ENCODE measurements at regions of chr10 and their contacts with region 1.

Region 1: GRCh38 chr10:74081192-74081803 is 69.3 kb downstream of the AP3M1 start:
- DNase-seq: no peak
- H3K4me3 ChIP-seq: no peak overlapping the region
- H3K27ac ChIP-seq: no peak overlapping the region
- H3K4me1 ChIP-seq: peaks cover 6 to 38% of the 10 kb centered on the region in 2 donors
- H3K27me3 ChIP-seq: no peaks in the 10 kb centered on the region
- CTCF ChIP-seq: peak; percentile 59 to 70 (median 62)

Region 2: DNA sequence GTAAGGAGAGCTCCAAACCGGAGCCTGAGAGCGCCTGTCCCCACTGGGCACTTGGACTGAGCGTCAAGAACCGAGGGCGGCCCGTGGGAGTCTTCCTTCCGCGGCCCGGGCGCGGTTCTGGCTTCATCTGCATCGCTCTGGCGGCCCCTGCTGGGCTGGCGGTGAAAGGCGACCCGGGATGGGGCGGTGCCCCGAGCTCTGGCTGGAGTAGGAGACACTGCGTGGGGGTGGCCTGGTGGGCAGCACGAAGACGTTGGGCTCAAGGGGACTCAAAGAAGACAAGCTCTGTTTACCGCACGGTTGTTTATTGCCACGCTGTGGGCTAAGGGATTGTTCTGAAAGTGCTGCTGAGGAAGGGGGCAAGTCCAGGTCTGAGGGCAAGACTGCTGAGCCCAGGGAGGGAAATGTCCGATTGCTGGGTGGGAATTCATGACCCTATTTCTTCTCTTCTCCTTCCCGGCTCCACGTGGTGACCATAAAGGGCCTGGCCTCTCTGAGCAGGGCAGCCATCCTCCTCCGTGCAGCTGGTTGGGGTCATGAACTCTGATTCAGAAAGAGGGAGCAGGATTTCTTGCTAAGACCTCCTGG is 140.6 kb before region 1 on chr10:
- intact Hi-C with region 1: loop called (anchors 5 kb)
- DNase-seq: peak; percentile 38 to 94
- H3K4me3 ChIP-seq: no peak overlapping the region
- H3K27ac ChIP-seq: peak overlapping the region; percentile 62 to 69
- H3K4me1 ChIP-seq: peaks cover 0 to 6% of the 10 kb centered on the region in 2 donors
- H3K27me3 ChIP-seq: no peaks in the 10 kb centered on the region
- CTCF ChIP-seq: peak; percentile 96

Region 3: DNA sequence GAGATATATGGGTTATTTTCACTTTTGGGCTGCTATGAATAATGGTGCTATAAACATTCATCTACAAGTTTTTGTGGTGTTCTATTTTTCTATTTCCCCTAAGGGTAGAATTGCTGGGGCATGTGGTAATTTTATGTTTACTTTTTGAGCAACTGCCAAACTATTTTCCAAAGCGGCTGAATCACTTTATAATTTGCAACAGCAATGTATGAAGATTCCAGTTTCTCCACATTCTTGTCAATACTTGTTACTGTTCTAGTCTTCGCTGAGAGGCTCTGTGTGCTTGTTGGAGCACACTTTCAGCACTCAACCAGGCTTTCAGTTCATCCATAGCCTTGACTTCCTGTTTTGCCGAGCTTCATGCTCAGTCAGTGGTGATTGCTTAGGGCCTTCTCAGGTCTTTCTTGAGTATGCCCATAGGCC is 108.7 kb after region 1 on chr10:
- intact Hi-C with region 1: no loop called
- DNase-seq: no peak
- H3K4me3 ChIP-seq: peak overlapping the region in 1 of 2 donors; percentile 38
- H3K27ac ChIP-seq: peak overlapping the region; percentile 62 to 75
- H3K4me1 ChIP-seq: peaks cover 0 to 13% of the 10 kb centered on the region in 2 donors
- H3K27me3 ChIP-seq: no peaks in the 10 kb centered on the region
- CTCF ChIP-seq: no peak